ENCODE measurements at regions of chr18 and their contacts with region 1.

Region 1: GRCh38 chr18:76803814-76804213 is 18.5 kb upstream of the ZNF236 start:
- DNase-seq: peak; percentile 35 to 83 (median 61)
- ATAC-seq: peak; percentile 70 to 85 (median 76)
- H3K4me3 ChIP-seq: no peak overlapping the region
- H3K4me3 Mint-ChIP-seq: peak overlapping the region in 1 of 3 donors; percentile 24
- H3K27ac ChIP-seq: no peak overlapping the region
- H3K27ac Mint-ChIP-seq: no peak overlapping the region
- H3K4me1 ChIP-seq: peaks cover 2 to 18% of the 10 kb centered on the region in 2 experiments
- H3K4me1 Mint-ChIP-seq: peaks cover 11 to 15% (median 11%) of the 10 kb centered on the region in 3 donors
- H3K27me3 ChIP-seq: peaks cover 0 to 16% of the 10 kb centered on the region in 2 experiments
- H3K27me3 Mint-ChIP-seq: peaks cover 0 to 17% of the 10 kb centered on the region in 2 donors

Region 2: DNA sequence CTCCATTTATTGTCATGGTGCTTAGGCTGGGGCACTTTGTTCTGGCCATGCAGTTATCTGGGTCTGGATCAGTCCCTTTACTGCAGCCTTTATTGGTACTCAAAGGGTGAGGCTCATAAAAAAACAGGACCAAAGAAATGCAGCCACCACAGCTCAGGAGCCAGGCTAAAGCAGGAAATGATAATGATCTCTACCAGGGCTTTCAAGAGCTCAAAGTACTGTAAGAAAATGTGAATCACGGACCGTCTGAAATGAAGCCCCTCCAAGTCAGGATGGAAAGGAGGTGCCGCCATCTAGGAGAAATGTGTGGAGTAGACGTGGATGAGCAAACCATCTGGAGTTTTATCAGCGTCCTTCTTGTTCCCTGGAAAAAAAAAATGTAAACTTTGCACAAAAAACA is 146.4 kb before region 1 on chr18:
- CTCF ChIA-PET with region 1: no interaction called
- POLR2A ChIA-PET with region 1: no interaction called
- DNase-seq: no peak
- ATAC-seq: no peak
- H3K4me3 ChIP-seq: no peak overlapping the region
- H3K4me3 Mint-ChIP-seq: no peak overlapping the region
- H3K27ac ChIP-seq: no peak overlapping the region
- H3K27ac Mint-ChIP-seq: no peak overlapping the region
- H3K4me1 ChIP-seq: peaks cover 2 to 3% of the 10 kb centered on the region in 2 experiments
- H3K4me1 Mint-ChIP-seq: peaks cover 15 to 18% (median 17%) of the 10 kb centered on the region in 3 donors
- H3K27me3 ChIP-seq: peaks cover 0 to 26% of the 10 kb centered on the region in 2 experiments
- H3K27me3 Mint-ChIP-seq: peaks cover 46 to 48% of the 10 kb centered on the region in 2 donors

Region 3: DNA sequence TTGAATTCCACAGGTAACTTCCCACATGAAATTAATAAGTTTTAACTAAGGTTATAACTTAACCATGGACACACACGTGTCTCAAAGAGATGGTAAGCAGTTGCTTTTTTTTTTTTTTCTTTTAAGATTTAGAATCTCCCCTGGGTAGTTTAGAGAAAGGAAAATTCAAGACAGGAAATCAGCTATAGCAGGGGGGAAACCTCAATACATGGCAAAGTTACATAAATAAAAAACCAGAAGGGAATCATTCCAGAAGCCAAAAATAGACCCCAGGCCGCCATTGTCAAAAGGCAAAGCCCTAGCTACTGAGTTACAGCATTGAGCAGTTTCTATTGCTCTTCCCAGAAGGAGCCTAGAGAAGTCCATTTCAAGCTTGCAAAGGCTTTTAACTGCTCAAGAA is 72.9 kb before region 1 on chr18:
- CTCF ChIA-PET with region 1: no interaction called
- POLR2A ChIA-PET with region 1: interaction called in 1 of 2 experiments, 12 read pairs
- DNase-seq: no peak
- ATAC-seq: no peak
- H3K4me3 ChIP-seq: no peak overlapping the region
- H3K4me3 Mint-ChIP-seq: no peak overlapping the region
- H3K27ac ChIP-seq: no peak overlapping the region
- H3K27ac Mint-ChIP-seq: no peak overlapping the region
- H3K4me1 ChIP-seq: no peaks in the 10 kb centered on the region
- H3K4me1 Mint-ChIP-seq: peaks cover 7 to 13% (median 13%) of the 10 kb centered on the region in 3 donors
- H3K27me3 ChIP-seq: peaks cover 0 to 11% of the 10 kb centered on the region in 2 experiments
- H3K27me3 Mint-ChIP-seq: peaks cover 0 to 14% of the 10 kb centered on the region in 2 donors

Region 4: GRCh38 chr18:76821875-76822509 is 18.2 kb after region 1 on chr18:
- CTCF ChIA-PET with region 1: interaction called, 7 to 27 read pairs
- POLR2A ChIA-PET with region 1: no interaction called
- DNase-seq: peak; percentile 40 to 81 (median 58)
- ATAC-seq: peak; percentile 69 to 77 (median 73)
- H3K4me3 ChIP-seq: peak overlapping the region; percentile 96 to 98
- H3K4me3 Mint-ChIP-seq: peak overlapping the region; percentile 89 to 93 (median 90)
- H3K27ac ChIP-seq: peak overlapping the region; percentile 81
- H3K27ac Mint-ChIP-seq: peak overlapping the region; percentile 91 to 94
- H3K4me1 ChIP-seq: peaks cover 11 to 41% of the 10 kb centered on the region in 2 experiments
- H3K4me1 Mint-ChIP-seq: peaks cover 46 to 54% (median 51%) of the 10 kb centered on the region in 3 donors
- H3K27me3 ChIP-seq: no peaks in the 10 kb centered on the region
- H3K27me3 Mint-ChIP-seq: no peaks in the 10 kb centered on the region

Region 5: GRCh38 chr18:76982841-76983587 is 179.2 kb after region 1 on chr18:
- CTCF ChIA-PET with region 1: interaction called, 17 to 19 read pairs
- POLR2A ChIA-PET with region 1: no interaction called
- DNase-seq: peak; percentile 59 to 87 (median 80)
- ATAC-seq: peak; percentile 91 to 96 (median 96)
- H3K4me3 ChIP-seq: no peak overlapping the region
- H3K4me3 Mint-ChIP-seq: no peak overlapping the region
- H3K27ac ChIP-seq: no peak overlapping the region
- H3K27ac Mint-ChIP-seq: no peak overlapping the region
- H3K4me1 ChIP-seq: peaks cover 2 to 11% of the 10 kb centered on the region in 2 experiments
- H3K4me1 Mint-ChIP-seq: peaks cover 8 to 11% (median 8%) of the 10 kb centered on the region in 3 donors
- H3K27me3 ChIP-seq: no peaks in the 10 kb centered on the region
- H3K27me3 Mint-ChIP-seq: no peaks in the 10 kb centered on the region

Measured in T-cell (primary cell).